ENCODE measurements at regions of chr1 and their contacts with region 1.

Region 1: GRCh38 chr1:206912445-206913095 is 9.2 kb downstream of the FCMR start:
- DNase-seq: peak; percentile 49
- H3K4me3 Mint-ChIP-seq: no peak overlapping the region
- H3K27ac Mint-ChIP-seq: no peak overlapping the region
- H3K4me1 Mint-ChIP-seq: peaks cover 68% of the 10 kb centered on the region
- H3K27me3 Mint-ChIP-seq: peaks cover 3% of the 10 kb centered on the region

Region 2: GRCh38 chr1:206507284-206508129 is 405.1 kb before region 1 on chr1 and contains the start of gene RASSF5:
- intact Hi-C with region 1: loop called (anchors 10 kb)
- DNase-seq: peak; percentile 82
- H3K4me3 Mint-ChIP-seq: peak within 1 kb of the TSS; percentile 78
- H3K27ac Mint-ChIP-seq: peak within 1 kb of the TSS; percentile 47
- H3K4me1 Mint-ChIP-seq: peaks cover 54% of the 10 kb centered on the region
- H3K27me3 Mint-ChIP-seq: peaks cover 17% of the 10 kb centered on the region
- total RNA-seq, gene RASSF5: 220 and 221 TPM in 2 replicates

Region 3: DNA sequence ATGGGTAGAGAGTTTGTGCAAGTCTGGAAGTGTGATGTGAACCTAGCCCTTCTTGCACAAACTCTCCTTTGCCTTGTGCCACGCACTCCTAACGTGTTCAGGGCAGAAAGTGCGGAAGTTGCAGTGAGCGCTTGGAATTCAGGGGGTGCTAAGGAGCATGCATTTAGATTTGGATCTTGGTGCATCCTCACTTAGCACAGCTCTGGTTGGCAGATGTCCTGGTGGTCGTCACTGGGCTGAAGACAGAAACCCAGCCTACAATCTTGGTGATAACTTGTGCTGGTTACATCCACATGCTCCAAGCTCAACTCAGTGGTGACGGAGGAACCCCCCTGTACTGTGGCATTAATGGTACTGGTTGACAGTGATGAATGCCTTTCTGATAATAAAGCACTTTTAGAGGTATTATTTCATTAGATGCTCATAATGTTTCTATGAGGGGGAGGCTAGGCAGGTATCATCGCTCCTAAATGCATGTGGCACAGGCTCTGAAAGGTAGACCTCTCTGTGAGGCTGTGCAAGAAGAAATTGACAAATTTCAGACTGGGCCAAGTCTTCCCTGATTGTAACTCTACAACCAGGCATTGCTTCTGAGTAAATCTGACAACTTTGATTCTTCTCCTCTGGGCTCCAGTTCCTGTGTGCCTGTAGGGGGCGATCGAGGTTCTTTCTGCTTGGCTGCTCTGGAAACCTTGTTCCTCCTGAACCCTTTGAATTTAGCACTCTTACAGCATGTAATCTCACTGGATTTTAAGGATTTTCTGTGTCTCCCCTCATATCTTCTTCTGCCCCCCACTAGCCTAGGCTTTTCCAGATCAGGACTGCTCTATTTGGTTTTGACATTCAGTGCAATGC is 187.2 kb before region 1 on chr1:
- intact Hi-C with region 1: loop called (anchors 1 kb)
- DNase-seq: peak; percentile 37
- H3K4me3 Mint-ChIP-seq: no peak overlapping the region
- H3K27ac Mint-ChIP-seq: peak overlapping the region; percentile 7
- H3K4me1 Mint-ChIP-seq: peaks cover 63% of the 10 kb centered on the region
- H3K27me3 Mint-ChIP-seq: no peaks in the 10 kb centered on the region

Region 4: GRCh38 chr1:206784471-206784903 is 128.1 kb before region 1 on chr1:
- intact Hi-C with region 1: loop called (anchors 1 kb)
- DNase-seq: peak; percentile 87
- H3K4me3 Mint-ChIP-seq: peak overlapping the region; percentile 72
- H3K27ac Mint-ChIP-seq: peak overlapping the region; percentile 93
- H3K4me1 Mint-ChIP-seq: peaks cover 69% of the 10 kb centered on the region
- H3K27me3 Mint-ChIP-seq: peaks cover 14% of the 10 kb centered on the region

Region 5: DNA sequence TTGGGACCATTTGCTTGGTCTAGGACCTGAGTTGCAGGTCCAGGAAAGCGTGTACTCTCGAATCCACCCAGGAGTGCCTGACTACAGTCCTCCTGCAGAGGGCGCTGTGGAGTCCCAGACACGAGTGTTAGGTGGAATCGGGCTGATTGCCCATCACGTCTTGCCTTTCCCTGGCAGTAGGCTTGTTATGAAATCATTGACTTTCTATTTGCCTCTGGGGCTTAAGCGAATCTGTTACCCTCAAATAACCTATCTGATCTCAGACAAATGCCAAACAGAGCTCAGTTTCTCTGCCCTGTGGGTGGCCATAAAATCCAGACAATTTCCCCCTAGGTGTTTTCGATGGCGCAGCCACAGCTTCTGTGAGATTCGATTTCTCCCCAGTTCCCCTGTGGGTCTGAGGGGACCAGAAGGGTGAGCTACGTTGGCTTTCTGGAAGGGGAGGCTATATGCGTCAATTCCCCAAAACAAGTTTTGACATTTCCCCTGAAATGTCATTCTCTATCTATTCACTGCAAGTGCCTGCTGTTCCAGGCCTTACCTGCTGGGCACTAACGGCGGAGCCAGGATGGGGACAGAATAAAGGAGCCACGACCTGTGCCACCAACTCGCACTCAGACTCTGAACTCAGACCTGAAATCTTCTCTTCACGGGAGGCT is 47.4 kb before region 1 on chr1 and contains the start of gene IL20:
- intact Hi-C with region 1: loop called (anchors 1 kb)
- DNase-seq: peak; percentile 68
- H3K4me3 Mint-ChIP-seq: no peak within 1 kb of the TSS
- H3K27ac Mint-ChIP-seq: no peak within 1 kb of the TSS
- H3K4me1 Mint-ChIP-seq: peaks cover 7% of the 10 kb centered on the region
- H3K27me3 Mint-ChIP-seq: peaks cover 39% of the 10 kb centered on the region
- total RNA-seq, gene IL20: not detected in 2 replicates

Region 6: DNA sequence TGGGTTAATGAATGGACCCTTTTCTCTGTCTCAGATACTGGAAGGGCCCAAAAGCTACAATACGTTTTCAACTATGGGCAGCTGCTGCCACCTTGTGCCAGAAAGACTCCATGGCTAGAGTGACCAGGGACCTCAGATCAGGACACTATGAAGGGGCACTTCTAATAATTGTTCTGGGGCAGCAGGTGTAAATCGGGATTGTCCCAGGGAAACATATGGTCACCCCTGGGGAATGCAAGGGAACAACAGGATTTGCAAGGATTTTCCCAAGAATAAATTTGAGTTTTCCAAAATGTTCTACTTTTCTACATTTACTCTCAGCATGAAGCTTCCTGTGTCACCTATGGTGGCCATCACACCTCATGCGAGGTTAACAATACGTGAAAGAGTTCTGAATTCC is 69.6 kb after region 1 on chr1:
- intact Hi-C with region 1: loop called (anchors 1 kb)
- DNase-seq: peak; percentile 36
- H3K4me3 Mint-ChIP-seq: no peak overlapping the region
- H3K27ac Mint-ChIP-seq: no peak overlapping the region
- H3K4me1 Mint-ChIP-seq: no peaks in the 10 kb centered on the region
- H3K27me3 Mint-ChIP-seq: peaks cover 34% of the 10 kb centered on the region